ENCODE measurements at regions of chr2 and their contacts with region 1.

Region 1: DNA sequence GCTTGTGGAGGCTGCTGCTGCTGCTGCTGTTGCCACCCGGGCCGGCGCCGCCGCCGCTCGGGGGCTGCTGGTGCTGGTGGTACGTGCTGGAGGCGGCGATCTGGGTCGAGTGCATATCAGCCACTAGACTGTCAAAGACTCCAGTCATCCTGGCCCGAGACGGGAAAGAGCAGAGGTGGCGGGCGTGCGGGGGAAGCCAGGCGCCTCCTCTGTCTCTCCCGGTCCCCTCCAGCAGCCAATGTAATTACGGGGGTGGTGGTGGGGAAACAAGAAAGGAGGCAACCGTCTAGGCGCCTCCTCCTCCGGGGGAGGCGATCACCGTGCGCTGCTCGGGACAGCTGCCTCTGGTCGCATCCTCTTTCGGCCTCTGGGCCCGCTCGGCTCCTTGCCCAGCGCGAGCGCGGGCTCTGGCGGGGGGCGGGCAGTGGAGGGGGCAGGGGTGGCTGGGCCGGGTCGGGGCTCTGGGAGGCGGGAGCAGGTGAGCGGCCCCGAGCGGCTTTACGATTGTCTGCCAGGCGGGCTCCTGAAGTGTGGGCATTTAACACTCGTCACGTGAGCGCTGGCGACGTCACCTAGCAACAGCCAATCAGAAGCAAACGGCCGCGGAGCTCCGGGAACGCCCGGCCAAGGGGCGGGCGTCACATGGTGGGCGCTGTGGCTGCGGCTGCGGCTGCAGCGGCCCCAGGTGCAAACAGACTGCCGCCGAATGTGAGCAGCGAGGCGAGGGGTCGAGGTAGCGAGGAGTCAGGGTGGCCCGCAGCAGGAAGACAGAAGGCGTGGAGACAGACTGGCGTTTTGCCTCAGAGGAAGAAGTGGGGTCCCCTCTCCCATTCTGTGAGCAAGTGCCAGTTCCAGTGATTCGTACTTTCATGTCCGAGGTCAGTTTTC is at the start of gene DLX2:
- DNase-seq: peak; percentile 87
- H3K4me3 ChIP-seq: peak within 1 kb of the TSS; percentile 12 to 52 (median 42)
- H3K27ac ChIP-seq: no peak within 1 kb of the TSS
- H3K4me1 ChIP-seq: peaks cover 39% of the 10 kb centered on the region
- H3K27me3 ChIP-seq: peaks cover 39 to 65% of the 10 kb centered on the region in 2 experiments
- CTCF ChIP-seq: no peak
- POLR2A ChIP-seq: no peak
- total RNA-seq, gene DLX2: not detected in 2 replicates

Region 2: GRCh38 chr2:170973492-170974303 is 1128.9 kb before region 1 on chr2:
- CTCF ChIA-PET with region 1: interaction called, 5 read pairs
- POLR2A ChIA-PET with region 1: no interaction called
- dilution Hi-C with region 1: no loop called
- intact Hi-C with region 1: loop called (anchors 10 kb)
- DNase-seq: peak; percentile 85
- H3K4me3 ChIP-seq: peak overlapping the region; percentile 54 to 74 (median 69)
- H3K27ac ChIP-seq: peak overlapping the region; percentile 79
- H3K4me1 ChIP-seq: peaks cover 8% of the 10 kb centered on the region
- H3K27me3 ChIP-seq: no peaks in the 10 kb centered on the region
- CTCF ChIP-seq: peak; percentile 83 to 98
- POLR2A ChIP-seq: peak; percentile 67

Region 3: GRCh38 chr2:171598713-171599319 is 503.8 kb before region 1 on chr2:
- CTCF ChIA-PET with region 1: interaction called, 11 read pairs
- POLR2A ChIA-PET with region 1: no interaction called
- dilution Hi-C with region 1: no loop called
- intact Hi-C with region 1: loop called (anchors 2 kb)
- DNase-seq: peak; percentile 58
- H3K4me3 ChIP-seq: no peak overlapping the region
- H3K27ac ChIP-seq: no peak overlapping the region
- H3K4me1 ChIP-seq: no peaks in the 10 kb centered on the region
- H3K27me3 ChIP-seq: peaks cover 9 to 12% of the 10 kb centered on the region in 2 experiments
- CTCF ChIP-seq: peak; percentile 67 to 70
- POLR2A ChIP-seq: no peak

Region 4: DNA sequence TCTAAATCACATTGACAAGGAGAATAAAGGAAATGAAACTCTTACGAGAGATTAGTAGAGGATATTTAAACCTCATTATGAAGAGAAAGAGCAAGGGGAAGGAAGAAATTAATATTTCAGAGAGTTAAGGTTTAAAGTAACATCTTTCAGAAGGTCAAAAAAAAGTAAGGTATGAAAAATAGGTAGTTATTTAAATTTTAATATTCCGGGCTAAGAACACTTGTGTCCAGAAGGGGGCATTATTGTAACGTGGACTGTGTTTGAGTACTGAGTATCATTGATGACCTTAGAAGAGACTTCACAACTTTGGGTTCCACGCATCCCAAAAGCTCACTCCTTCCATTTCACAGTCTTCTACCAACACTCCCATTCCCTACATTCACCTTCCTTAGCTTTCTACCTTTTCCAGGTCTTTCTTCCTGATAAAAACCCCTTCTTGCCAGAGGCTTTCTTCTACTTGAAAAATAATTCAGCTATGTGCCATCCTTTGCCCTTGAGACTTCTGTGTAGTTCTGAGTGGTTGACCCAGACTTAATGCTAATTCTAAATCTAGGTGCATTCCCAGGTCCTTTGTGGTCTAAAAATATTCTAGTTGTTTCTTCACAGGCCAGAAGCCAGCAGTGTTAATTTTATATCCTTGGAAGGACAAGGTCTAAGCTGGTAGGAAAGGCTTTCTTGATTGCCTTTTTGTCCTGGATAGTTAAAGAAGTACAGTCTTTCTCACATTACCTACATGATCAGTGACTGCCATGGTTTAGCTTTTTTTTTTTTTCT is 398.9 kb before region 1 on chr2:
- CTCF ChIA-PET with region 1: interaction called, 193 read pairs
- POLR2A ChIA-PET with region 1: no interaction called
- dilution Hi-C with region 1: no loop called
- intact Hi-C with region 1: loop called (anchors 1 kb)
- DNase-seq: peak; percentile 59
- H3K4me3 ChIP-seq: no peak overlapping the region
- H3K27ac ChIP-seq: no peak overlapping the region
- H3K4me1 ChIP-seq: peaks cover 4% of the 10 kb centered on the region
- H3K27me3 ChIP-seq: no peaks in the 10 kb centered on the region
- CTCF ChIP-seq: peak; percentile 19 to 39
- POLR2A ChIP-seq: no peak

Region 5: DNA sequence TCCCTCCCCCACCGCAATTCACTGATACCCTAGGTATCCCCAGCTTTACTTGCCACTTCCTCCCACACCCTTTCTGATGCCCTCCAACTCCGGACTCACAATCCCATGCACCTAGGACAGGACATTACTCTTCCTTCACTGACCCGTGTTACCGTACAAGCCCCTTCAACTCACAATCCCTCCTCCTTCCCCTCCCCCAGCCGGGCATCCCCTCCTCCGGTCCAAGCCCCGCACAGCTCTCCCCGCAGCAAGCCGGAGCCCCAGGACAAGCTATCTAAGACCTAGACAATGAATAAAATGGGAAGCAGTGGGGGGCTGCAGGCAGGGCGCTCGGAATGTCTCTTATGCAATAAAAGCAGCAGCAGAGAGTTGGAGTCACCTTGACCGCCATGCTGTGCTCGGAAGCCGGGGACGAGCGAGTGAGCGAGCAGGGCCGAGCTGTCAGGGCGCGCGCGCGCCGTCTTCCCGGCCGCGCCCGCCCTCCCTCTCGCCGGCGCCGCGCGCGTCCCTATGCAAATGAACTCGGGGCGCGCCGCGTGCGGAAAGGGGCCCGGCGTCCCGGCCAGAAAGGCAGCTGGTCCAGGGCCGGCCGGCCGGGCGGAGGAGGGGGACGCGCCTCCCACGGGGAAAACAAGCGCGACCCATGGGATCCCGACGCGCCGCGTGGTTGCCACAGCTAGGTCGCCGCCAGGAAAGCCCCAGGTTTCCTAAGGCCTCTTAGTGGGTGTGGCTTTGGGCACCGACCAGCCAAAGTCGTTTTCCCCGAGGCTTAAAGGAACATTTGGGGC is 208.6 kb before region 1 on chr2 and contains the start of gene SLC25A12:
- CTCF ChIA-PET with region 1: interaction called, 5 read pairs
- POLR2A ChIA-PET with region 1: no interaction called
- dilution Hi-C with region 1: no loop called
- intact Hi-C with region 1: loop called (anchors 10 kb)
- DNase-seq: peak; percentile 81
- H3K4me3 ChIP-seq: peak within 1 kb of the TSS; percentile 63 to 83 (median 64)
- H3K27ac ChIP-seq: peak within 1 kb of the TSS; percentile 65
- H3K4me1 ChIP-seq: peaks cover 9% of the 10 kb centered on the region
- H3K27me3 ChIP-seq: no peaks in the 10 kb centered on the region
- CTCF ChIP-seq: no peak
- POLR2A ChIP-seq: peak; percentile 74
- total RNA-seq, gene SLC25A12: 17.1 and 17.5 TPM in 2 replicates

Region 6: DNA sequence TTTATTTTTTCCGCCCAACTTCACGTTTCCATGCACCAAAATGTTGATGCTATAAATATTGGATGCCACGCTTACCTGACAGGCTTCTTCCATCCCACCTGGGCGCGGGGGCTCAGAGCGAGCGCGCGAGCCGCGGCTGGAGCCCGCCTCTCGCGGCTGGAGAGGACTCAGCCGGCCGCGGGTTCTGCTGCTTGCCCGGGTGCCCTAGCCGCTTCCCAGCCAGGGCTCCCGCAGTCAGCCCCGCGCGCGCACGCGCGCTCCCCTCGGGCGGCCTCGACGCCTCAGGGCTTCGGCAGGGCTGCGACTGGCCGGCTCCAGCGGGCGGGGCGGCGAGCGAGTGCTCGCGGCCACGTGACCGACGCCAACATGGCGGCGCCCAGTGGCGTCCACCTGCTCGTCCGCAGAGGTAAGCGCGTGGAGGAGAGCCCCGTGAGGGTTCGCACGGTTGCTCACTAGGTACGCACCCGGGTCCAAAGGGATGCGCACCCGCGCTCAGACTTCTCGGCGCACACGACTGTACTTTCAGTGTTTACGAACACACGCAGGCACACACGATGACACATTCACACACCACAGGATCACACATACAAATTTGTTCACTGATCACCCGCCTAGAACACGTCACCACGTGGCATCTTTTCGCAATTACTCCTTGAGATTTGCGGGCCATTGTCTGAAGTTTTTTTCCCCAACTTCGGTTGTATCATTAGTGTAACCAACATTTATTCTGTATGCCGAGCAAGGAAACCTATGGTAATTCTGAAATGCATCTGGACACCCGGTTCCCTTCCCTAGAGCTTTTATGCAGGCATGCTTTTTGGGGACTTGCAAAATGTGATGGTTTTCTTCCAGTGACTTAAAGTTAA is 102.8 kb before region 1 on chr2 and contains the start of gene METAP1D:
- CTCF ChIA-PET with region 1: no interaction called
- POLR2A ChIA-PET with region 1: interaction called, 6 read pairs
- dilution Hi-C with region 1: no loop called
- intact Hi-C with region 1: loop called (anchors 2 kb)
- DNase-seq: peak; percentile 94
- H3K4me3 ChIP-seq: peak within 1 kb of the TSS; percentile 10 to 93 (median 65)
- H3K27ac ChIP-seq: peak within 1 kb of the TSS; percentile 18
- H3K4me1 ChIP-seq: peaks cover 9% of the 10 kb centered on the region
- H3K27me3 ChIP-seq: peaks cover 8 to 16% of the 10 kb centered on the region in 2 experiments
- CTCF ChIP-seq: no peak
- POLR2A ChIP-seq: peak; percentile 82
- total RNA-seq, gene METAP1D: 8.1 TPM in 2 replicates

Region 7: DNA sequence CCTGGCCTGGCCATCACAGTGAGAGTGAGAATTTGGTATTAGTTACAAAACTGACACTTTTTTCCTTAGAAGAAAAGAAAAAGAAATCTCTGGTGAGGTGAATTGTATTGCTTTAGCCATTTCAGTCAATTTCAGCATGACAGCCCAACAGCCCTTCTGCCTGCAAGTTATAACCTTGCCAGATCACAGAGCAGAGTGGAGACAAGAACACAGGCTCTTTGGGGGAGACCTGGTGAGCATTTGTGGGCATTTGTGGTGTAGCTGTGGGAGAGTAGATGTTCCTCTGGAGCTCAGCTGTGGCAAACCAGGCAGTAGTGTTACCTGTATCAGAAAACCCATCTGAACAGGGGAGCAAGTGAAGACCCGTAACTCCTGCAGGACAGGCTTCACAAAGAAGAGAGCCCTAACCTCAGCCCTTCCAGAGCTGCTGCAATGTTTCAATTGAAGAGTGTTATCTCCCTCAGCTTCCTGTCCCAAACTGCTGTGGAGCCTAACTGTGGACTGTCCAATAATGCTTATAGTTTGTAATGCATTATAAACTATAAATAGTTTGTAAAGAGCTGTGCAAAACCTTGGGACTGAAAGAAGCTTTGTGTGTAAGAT is 40.1 kb before region 1 on chr2:
- CTCF ChIA-PET with region 1: no interaction called
- POLR2A ChIA-PET with region 1: no interaction called
- dilution Hi-C with region 1: no loop called
- intact Hi-C with region 1: no loop called
- DNase-seq: no peak
- H3K4me3 ChIP-seq: no peak overlapping the region
- H3K27ac ChIP-seq: no peak overlapping the region
- H3K4me1 ChIP-seq: no peaks in the 10 kb centered on the region
- H3K27me3 ChIP-seq: no peaks in the 10 kb centered on the region
- CTCF ChIP-seq: no peak
- POLR2A ChIP-seq: no peak

Region 8: GRCh38 chr2:172113617-172114016 is 11.0 kb after region 1 on chr2:
- CTCF ChIA-PET with region 1: interaction called, 14 read pairs
- POLR2A ChIA-PET with region 1: no interaction called
- dilution Hi-C with region 1: no loop called
- intact Hi-C with region 1: no loop called
- DNase-seq: peak; percentile 42
- H3K4me3 ChIP-seq: no peak overlapping the region
- H3K27ac ChIP-seq: no peak overlapping the region
- H3K4me1 ChIP-seq: peaks cover under 1% of the 10 kb centered on the region
- H3K27me3 ChIP-seq: no peaks in the 10 kb centered on the region
- CTCF ChIP-seq: no peak
- POLR2A ChIP-seq: no peak

Region 9: DNA sequence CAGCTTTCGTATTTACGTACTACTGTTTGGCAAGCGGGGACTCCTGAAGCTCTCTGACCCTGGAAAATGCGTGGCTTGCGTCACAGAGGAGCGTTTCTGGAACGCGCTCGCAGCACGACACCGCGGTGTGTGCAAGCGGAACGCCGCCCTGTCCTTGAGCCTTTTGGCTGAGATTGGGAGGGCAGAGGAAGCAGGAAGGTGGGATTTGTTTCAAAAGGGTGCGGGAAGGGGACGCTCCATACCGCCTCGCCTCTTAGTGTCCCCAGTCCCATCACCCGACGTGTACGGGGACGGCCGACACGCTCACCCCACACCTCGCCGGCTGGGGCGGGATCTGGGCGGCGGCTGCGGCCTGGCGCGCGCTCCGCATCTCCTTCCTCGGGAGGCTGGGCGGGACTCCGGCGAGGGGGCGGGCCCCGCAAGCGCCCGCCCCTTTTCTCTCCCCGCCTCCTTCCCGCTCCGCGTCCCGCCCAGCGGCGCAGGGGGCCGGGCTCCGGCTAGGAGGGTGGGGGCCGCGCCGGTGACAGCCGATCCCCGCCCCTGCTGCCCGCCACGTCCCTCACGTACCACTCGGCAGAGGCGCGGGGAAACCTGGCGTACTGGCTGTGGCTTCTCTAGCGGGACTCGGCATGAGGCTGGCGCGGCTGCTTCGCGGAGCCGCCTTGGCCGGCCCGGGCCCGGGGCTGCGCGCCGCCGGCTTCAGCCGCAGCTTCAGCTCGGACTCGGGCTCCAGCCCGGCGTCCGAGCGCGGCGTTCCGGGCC is 453.1 kb after region 1 on chr2 and contains the start of gene PDK1:
- CTCF ChIA-PET with region 1: no interaction called
- POLR2A ChIA-PET with region 1: no interaction called
- dilution Hi-C with region 1: no loop called
- intact Hi-C with region 1: no loop called
- DNase-seq: peak; percentile 90
- H3K4me3 ChIP-seq: peak within 1 kb of the TSS; percentile 11 to 53 (median 51)
- H3K27ac ChIP-seq: peak within 1 kb of the TSS; percentile 74
- H3K4me1 ChIP-seq: peaks cover 27% of the 10 kb centered on the region
- H3K27me3 ChIP-seq: no peaks in the 10 kb centered on the region
- CTCF ChIP-seq: no peak
- POLR2A ChIP-seq: peak; percentile 95
- total RNA-seq, gene PDK1: 7.7 and 16.9 TPM in 2 replicates